ENCODE measurements at regions of chr10 and their contacts with region 1.

Region 1: DNA sequence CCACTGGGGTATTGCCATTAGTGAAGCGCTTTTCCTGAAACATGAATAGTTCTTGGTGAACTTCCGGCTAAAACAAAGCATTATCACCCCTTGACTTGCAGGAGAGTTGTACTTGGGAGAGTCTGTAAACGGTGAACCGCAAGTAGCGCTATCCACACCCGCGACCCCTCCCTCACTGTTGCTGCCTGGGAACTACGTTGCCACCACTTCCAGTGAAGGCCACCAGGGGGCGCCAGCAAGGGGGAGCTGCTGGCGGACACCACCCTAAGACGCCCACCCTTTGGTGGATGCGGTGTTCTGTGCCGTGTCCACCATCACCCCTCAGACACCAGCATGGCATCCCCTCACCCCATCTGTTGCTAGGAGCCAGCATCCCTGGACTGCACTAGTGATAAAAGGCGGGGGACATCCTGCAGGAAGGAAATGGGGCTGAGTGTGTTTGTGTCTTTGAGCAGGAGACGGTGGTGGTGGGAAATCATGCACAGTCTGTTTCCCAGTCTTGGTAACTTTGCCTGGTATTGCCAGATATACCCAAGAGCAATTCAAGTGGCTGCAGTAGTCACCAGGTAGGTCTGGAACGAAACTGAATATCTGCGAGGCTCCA is 298.2 kb downstream of the FRMD4A start:
- DNase-seq: peak; percentile 73 to 96
- H3K4me3 ChIP-seq: no peak overlapping the region
- H3K27ac ChIP-seq: no peak overlapping the region
- H3K4me1 ChIP-seq: no peaks in the 10 kb centered on the region
- H3K27me3 ChIP-seq: no peaks in the 10 kb centered on the region
- CTCF ChIP-seq: peak; percentile 92 to 99 (median 98)
- EP300 ChIP-seq: no peak
- POLR2A ChIP-seq: no peak
- RAD21 ChIP-seq: peak; percentile 80 to 85

Region 2: GRCh38 chr10:14016011-14016536 is 16.4 kb before region 1 on chr10:
- CTCF ChIA-PET with region 1: interaction called, 26 read pairs
- POLR2A ChIA-PET with region 1: interaction called, 3 read pairs
- DNase-seq: no peak
- H3K4me3 ChIP-seq: no peak overlapping the region
- H3K27ac ChIP-seq: no peak overlapping the region
- H3K4me1 ChIP-seq: peaks cover 0 to 3% (median 0%) of the 10 kb centered on the region in 4 experiments; a peak in 1 of 7 replicates
- H3K27me3 ChIP-seq: no peaks in the 10 kb centered on the region; a peak in 2 of 7 replicates
- CTCF ChIP-seq: no peak
- EP300 ChIP-seq: no peak
- POLR2A ChIP-seq: no peak
- RAD21 ChIP-seq: no peak

Region 3: GRCh38 chr10:14052931-14053330 is 20.4 kb after region 1 on chr10:
- CTCF ChIA-PET with region 1: interaction called, 31 read pairs
- POLR2A ChIA-PET with region 1: no interaction called
- DNase-seq: no peak
- H3K4me3 ChIP-seq: no peak overlapping the region
- H3K27ac ChIP-seq: no peak overlapping the region
- H3K4me1 ChIP-seq: peaks cover 0 to 6% (median 4%) of the 10 kb centered on the region in 4 experiments; a peak in 4 of 7 replicates
- H3K27me3 ChIP-seq: no peaks in the 10 kb centered on the region
- CTCF ChIP-seq: no peak
- EP300 ChIP-seq: no peak
- POLR2A ChIP-seq: no peak
- RAD21 ChIP-seq: no peak

Region 4: DNA sequence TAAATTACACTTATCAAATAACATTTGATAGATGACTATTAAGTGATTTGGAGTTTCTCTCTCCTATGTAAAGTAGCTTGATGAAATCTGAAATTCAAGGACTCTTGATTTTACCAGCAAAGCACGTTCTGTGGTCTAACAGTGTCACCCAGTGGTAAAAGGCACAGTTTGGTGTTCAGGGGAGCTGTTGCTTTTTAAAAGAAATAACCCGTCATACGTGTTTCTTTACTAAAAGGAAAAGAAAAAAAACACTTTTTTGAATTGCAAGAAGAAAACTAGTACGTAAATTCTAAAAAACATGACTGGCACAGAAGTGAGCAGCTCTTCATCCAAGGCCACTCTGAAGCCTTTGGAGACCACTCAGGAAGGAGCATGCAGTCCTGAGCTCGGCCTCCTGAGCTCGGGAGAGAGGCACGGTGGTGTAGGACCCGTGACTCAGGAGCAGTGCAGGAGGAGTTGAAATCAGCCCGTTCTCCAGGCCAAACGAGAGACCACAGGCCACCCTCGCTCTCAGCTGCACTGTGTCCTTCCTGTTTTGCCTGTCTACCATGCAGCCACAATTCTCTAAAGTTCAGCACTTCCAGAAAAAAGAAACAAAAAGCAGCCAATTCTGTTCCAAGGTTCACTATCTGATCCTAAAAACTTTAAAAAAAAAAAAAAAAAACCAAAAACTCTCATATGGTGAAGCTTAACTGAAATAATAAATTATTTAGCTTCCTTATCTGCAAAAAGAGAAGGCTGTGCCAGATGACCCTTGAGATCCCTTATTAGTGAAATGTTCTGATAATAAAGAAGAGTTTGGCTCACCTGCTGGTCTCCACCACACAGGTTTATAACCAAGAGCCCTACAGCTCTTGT is 510.8 kb after region 1 on chr10:
- CTCF ChIA-PET with region 1: no interaction called
- POLR2A ChIA-PET with region 1: no interaction called
- DNase-seq: no peak
- H3K4me3 ChIP-seq: no peak overlapping the region
- H3K27ac ChIP-seq: no peak overlapping the region
- H3K4me1 ChIP-seq: peaks cover 0 to 8% (median 4%) of the 10 kb centered on the region in 4 experiments; a peak in 3 of 7 replicates
- H3K27me3 ChIP-seq: no peaks in the 10 kb centered on the region
- CTCF ChIP-seq: peak in 1 of 3 experiments; percentile 6; a peak in 1 of 4 replicates
- EP300 ChIP-seq: no peak
- POLR2A ChIP-seq: no peak
- RAD21 ChIP-seq: peak; percentile 38 to 45

Measured in H1 (cell line).